HepG2 (cell line): ENCODE measurements at regions of chr4 and their contacts with region 1.

Region 1: GRCh38 chr4:138114434-138114833 is 127.7 kb downstream of the SLC7A11 start:
- DNase-seq: no peak
- ATAC-seq: no peak
- H3K4me3 ChIP-seq: no peak overlapping the region
- H3K27ac ChIP-seq: no peak overlapping the region
- H3K4me1 ChIP-seq: peaks cover 37% of the 10 kb centered on the region
- H3K27me3 ChIP-seq: no peaks in the 10 kb centered on the region
- CTCF ChIP-seq: no peak
- EP300 ChIP-seq: no peak
- POLR2A ChIP-seq: no peak
- RAD21 ChIP-seq: no peak

Region 2: GRCh38 chr4:137421796-137422195 is 692.6 kb before region 1 on chr4:
- CTCF ChIA-PET with region 1: no interaction called
- POLR2A ChIA-PET with region 1: no interaction called
- in situ Hi-C with region 1: no loop called
- intact Hi-C with region 1: no loop called
- DNase-seq: no peak
- ATAC-seq: no peak
- H3K4me3 ChIP-seq: no peak overlapping the region
- H3K27ac ChIP-seq: no peak overlapping the region
- H3K4me1 ChIP-seq: no peaks in the 10 kb centered on the region
- H3K27me3 ChIP-seq: no peaks in the 10 kb centered on the region
- CTCF ChIP-seq: no peak
- EP300 ChIP-seq: no peak
- POLR2A ChIP-seq: no peak
- RAD21 ChIP-seq: no peak

Region 3: GRCh38 chr4:138158746-138159297 is 44.4 kb after region 1 on chr4:
- CTCF ChIA-PET with region 1: no interaction called
- POLR2A ChIA-PET with region 1: no interaction called
- in situ Hi-C with region 1: no loop called
- intact Hi-C with region 1: loop called (anchors 5 kb)
- DNase-seq: no peak
- ATAC-seq: no peak
- H3K4me3 ChIP-seq: no peak overlapping the region
- H3K27ac ChIP-seq: no peak overlapping the region
- H3K4me1 ChIP-seq: peaks cover 7% of the 10 kb centered on the region
- H3K27me3 ChIP-seq: no peaks in the 10 kb centered on the region; a peak in 1 of 5 replicates
- CTCF ChIP-seq: no peak
- EP300 ChIP-seq: no peak
- POLR2A ChIP-seq: no peak
- RAD21 ChIP-seq: no peak

Region 4: DNA sequence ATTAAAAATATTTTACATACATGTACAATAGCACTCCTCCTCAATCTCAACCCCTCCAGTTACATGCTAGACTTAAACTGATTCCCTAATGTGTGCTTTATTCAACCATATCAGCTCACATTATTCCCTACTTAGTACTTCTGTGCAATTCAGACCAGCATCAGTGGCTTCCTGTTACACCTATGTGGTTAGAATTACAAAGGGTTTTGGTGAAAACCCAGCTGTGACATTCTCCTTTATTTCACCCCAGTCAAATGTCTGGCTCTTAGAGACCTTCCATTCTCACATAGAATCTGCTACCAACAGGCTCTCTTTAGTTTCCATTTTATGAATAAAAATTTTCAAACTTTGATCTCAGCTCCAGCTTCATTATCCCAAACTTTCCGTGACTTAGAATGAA is 212.9 kb after region 1 on chr4:
- CTCF ChIA-PET with region 1: no interaction called
- POLR2A ChIA-PET with region 1: no interaction called
- in situ Hi-C with region 1: no loop called
- intact Hi-C with region 1: no loop called
- DNase-seq: no peak
- ATAC-seq: no peak
- H3K4me3 ChIP-seq: no peak overlapping the region
- H3K27ac ChIP-seq: no peak overlapping the region
- H3K4me1 ChIP-seq: no peaks in the 10 kb centered on the region
- H3K27me3 ChIP-seq: no peaks in the 10 kb centered on the region
- CTCF ChIP-seq: no peak
- EP300 ChIP-seq: no peak
- POLR2A ChIP-seq: no peak
- RAD21 ChIP-seq: no peak